Heart right ventricle (tissue), 16 donors: ENCODE measurements at regions of chr7 and their contacts with region 1.

Region 1: DNA sequence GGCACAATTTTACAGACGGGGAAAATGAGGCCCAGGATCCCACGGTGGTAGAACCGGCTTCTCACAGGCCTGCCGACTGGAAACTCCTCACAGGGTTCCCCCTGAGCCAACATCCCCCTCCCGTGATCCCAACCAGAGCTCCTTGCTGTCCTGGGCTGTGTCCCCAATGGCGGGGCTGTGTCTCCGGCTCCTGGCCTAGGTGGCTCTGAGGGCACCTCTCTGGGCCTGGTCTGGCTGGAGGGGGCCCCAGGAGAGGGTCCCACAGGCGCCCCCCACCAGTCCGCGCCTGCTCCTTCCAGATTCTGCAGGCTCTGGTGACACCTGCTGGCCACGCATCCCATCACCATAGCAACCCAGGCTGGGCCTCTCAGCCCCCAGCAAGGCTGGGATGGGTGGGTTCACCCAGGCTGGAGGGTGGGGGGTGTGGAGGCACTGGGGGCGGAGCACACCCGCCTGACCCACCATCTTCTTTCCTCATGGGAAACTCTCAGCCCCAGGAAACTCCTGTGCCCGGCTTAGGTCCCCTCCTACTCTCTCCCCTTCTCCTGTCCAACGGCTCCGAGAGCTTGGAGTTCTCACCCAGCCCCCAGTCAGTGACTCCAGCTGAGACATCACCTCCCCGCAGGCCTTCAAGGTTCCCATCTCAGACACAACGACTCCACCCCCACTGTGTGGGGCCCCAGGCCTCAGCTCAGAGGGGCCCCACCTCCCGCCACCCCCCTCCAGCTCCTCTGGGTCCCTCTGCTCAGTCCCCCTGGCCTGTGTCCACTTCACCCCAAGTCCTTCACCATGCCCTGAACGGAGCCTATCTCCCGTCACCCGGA is 27.1 kb upstream of the TNRC18 start:
- DNase-seq: peak; percentile 55 to 62
- ATAC-seq: peak; percentile 68 to 90 (median 82)
- H3K4me3 ChIP-seq: no peak overlapping the region
- H3K27ac ChIP-seq: no peak overlapping the region
- H3K4me1 ChIP-seq: peaks cover 0 to 5% (median 0%) of the 10 kb centered on the region in 9 donors
- H3K27me3 ChIP-seq: peaks cover 0 to 1% (median 0%) of the 10 kb centered on the region in 7 donors
- CTCF ChIP-seq: peak; percentile 43 to 84 (median 75)

Region 2: GRCh38 chr7:4386190-4386589 is 1064.6 kb before region 1 on chr7:
- intact Hi-C with region 1: no loop called
- DNase-seq: no peak
- ATAC-seq: no peak
- H3K4me3 ChIP-seq: no peak overlapping the region
- H3K27ac ChIP-seq: no peak overlapping the region
- H3K4me1 ChIP-seq: no peaks in the 10 kb centered on the region
- H3K27me3 ChIP-seq: peaks cover 0 to 3% (median 0%) of the 10 kb centered on the region in 7 donors
- CTCF ChIP-seq: no peak

Region 3: DNA sequence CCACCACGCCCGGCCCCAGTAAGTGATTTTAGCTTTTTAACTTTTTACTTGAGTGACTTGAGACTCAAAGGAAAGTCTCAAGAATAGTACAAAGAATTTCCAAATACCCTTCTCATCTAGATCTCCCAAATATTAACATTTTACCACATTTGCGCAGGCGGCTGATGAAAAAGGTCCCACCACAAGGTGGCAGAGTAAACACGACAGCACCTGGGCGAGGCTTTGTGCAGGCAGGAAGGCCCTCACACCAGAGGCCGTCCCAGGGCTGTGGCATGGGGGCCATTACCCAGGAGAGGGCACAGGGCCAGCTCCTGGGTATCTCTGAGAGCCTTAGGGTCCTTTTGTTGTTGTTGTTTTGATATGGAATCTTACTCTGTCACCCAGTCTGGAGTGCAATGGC is 310.8 kb before region 1 on chr7:
- intact Hi-C with region 1: loop called in 1 of 10 experiments (anchors 10 kb)
- DNase-seq: peak in 1 of 2 donors; percentile 12
- ATAC-seq: peak in 1 of 8 donors; percentile 27
- H3K4me3 ChIP-seq: no peak overlapping the region
- H3K27ac ChIP-seq: no peak overlapping the region
- H3K4me1 ChIP-seq: no peaks in the 10 kb centered on the region
- H3K27me3 ChIP-seq: peaks cover 0 to 23% (median 8%) of the 10 kb centered on the region in 7 donors
- CTCF ChIP-seq: peak in 8 of 9 donors; percentile 15 to 50 (median 42)

Region 4: GRCh38 chr7:5237286-5237685 is 213.5 kb before region 1 on chr7:
- intact Hi-C with region 1: loop called in 8 of 10 experiments (anchors 1 to 10 kb)
- DNase-seq: peak; percentile 53 to 74
- ATAC-seq: peak; percentile 33 to 76 (median 60)
- H3K4me3 ChIP-seq: peak overlapping the region in 4 of 10 donors; percentile 4 to 27 (median 8)
- H3K27ac ChIP-seq: peak overlapping the region in 6 of 10 donors; percentile 15 to 77 (median 36)
- H3K4me1 ChIP-seq: peaks cover 0 to 41% (median 11%) of the 10 kb centered on the region in 9 donors
- H3K27me3 ChIP-seq: peaks cover 0 to 6% (median 0%) of the 10 kb centered on the region in 7 donors
- CTCF ChIP-seq: no peak

Region 5: GRCh38 chr7:5243261-5243660 is 207.5 kb before region 1 on chr7:
- intact Hi-C with region 1: loop called in 8 of 10 experiments (anchors 1 to 10 kb)
- DNase-seq: no peak
- ATAC-seq: no peak
- H3K4me3 ChIP-seq: no peak overlapping the region
- H3K27ac ChIP-seq: no peak overlapping the region
- H3K4me1 ChIP-seq: peaks cover 0 to 17% (median 11%) of the 10 kb centered on the region in 9 donors
- H3K27me3 ChIP-seq: peaks cover 0 to 6% (median 0%) of the 10 kb centered on the region in 7 donors
- CTCF ChIP-seq: no peak

Region 6: DNA sequence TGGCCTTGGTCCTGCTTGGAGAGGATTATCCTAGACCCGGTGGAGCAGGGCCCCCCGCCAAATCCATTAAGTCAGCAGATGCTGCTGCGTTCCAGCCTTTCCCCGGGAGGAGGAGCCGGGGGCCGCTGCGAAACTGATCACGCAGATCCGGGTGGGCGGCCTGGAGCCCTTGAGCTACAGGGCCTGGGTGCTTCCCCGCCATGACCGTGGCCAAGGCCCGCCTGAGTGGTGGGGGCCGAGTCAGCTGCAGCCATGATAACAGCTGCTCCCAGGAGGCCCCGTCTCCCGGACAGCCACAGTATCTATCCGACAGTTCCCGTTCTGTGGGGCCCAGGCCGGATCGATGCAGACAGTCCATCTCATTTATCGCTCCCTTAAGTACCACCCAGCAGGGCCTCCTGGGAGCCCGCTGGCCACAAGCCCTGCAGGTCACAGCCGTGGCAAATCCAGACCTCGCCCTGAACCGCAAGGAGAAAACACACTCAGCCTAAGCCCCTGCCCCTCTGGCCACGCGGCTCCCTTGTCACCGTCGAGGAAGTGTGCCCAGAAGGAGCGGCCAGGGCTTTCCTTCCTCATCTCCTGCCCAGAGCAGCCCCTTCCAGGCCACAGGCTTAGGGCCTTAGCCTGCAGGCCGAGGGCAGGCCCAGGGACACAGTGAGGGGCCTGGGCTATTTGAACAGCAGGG is 202.4 kb before region 1 on chr7:
- intact Hi-C with region 1: loop called in 6 of 10 experiments (anchors 5 to 10 kb)
- DNase-seq: peak; percentile 59 to 76
- ATAC-seq: peak; percentile 72 to 95 (median 90)
- H3K4me3 ChIP-seq: no peak overlapping the region
- H3K27ac ChIP-seq: peak overlapping the region in 2 of 10 donors; percentile 7 to 51
- H3K4me1 ChIP-seq: peaks cover 0 to 7% (median 0%) of the 10 kb centered on the region in 9 donors
- H3K27me3 ChIP-seq: peaks cover 0 to 12% (median 0%) of the 10 kb centered on the region in 7 donors
- CTCF ChIP-seq: no peak

Region 7: DNA sequence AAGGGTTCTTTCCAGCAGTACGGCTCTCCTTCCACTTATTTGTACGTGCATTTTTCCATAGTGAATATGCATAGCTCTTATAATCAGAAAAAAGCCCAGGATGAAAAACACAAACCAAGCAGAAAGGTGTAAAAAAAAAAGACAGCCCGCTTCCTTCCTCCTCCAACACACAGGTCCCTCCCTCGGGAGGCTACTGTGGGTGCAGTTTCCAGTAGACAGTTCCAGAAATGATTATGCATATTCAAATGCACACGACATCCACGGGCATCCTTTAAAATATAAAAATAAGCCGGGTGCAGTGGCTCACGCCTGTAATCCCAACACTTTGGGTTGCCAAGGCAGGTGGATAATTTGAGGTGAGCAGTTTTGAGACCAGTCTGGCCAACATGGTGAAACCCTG is 87.0 kb before region 1 on chr7:
- intact Hi-C with region 1: loop called (anchors 1 to 10 kb)
- DNase-seq: no peak
- ATAC-seq: no peak
- H3K4me3 ChIP-seq: no peak overlapping the region
- H3K27ac ChIP-seq: no peak overlapping the region
- H3K4me1 ChIP-seq: peaks cover 0 to 23% (median 7%) of the 10 kb centered on the region in 9 donors
- H3K27me3 ChIP-seq: no peaks in the 10 kb centered on the region
- CTCF ChIP-seq: no peak

Region 8: GRCh38 chr7:5838761-5839500 is 388.2 kb after region 1 on chr7:
- intact Hi-C with region 1: no loop called
- DNase-seq: no peak
- ATAC-seq: no peak
- H3K4me3 ChIP-seq: no peak overlapping the region
- H3K27ac ChIP-seq: no peak overlapping the region
- H3K4me1 ChIP-seq: no peaks in the 10 kb centered on the region
- H3K27me3 ChIP-seq: no peaks in the 10 kb centered on the region
- CTCF ChIP-seq: no peak